WTC11 (cell line): ENCODE measurements at regions of chr22 and their contacts with region 1.

Region 1: DNA sequence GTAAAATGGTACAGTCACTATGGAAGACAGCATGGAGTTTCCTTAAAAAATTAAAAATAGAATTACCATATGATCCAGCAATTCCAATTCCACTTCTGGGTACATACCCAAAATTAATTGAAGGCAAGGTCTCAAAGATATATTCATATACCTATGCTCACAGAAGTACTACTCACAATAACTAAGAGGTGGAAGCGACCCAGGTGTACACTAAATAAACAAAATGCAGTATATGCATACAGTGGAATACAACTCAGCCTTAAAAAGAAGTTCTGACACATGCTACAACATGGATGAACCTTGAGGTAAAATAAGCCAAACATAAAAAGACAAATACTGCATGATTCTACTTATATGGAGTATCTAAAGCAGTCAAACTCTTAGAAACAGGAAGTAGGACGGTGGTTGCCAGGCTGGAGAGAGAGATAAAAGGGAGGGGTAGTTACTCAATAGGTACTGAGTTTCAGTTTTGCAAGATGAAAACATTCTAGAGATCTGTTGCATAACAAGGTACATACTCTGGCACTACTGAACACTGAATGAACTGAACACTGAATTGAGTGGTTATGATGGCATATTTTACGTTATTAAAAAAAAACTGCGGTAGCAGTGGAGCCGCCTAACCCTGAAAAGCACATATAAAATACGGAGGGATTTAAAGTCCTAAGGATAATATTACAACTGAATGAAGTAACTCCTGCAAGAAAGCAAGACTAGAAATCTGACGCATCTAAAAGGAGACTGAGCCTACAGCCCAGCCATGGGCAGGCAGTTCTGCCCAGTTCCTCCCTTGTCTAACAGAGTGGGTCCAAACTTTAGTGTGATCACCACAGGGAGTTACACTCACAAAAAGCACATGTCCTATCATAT is 12.8 kb downstream of the DGCR2 start:
- DNase-seq: no peak
- ATAC-seq: no peak
- H3K4me3 Mint-ChIP-seq: no peak overlapping the region
- H3K27ac Mint-ChIP-seq: peak overlapping the region; percentile 55
- H3K4me1 Mint-ChIP-seq: peaks cover 22% of the 10 kb centered on the region
- H3K27me3 Mint-ChIP-seq: no peaks in the 10 kb centered on the region
- CTCF ChIP-seq: no peak

Region 2: GRCh38 chr22:19085233-19085718 is 24.2 kb before region 1 on chr22:
- CTCF ChIA-PET with region 1: interaction called, 11 read pairs
- POLR2A ChIA-PET with region 1: interaction called, 6 read pairs
- DNase-seq: no peak
- ATAC-seq: peak; percentile 70
- H3K4me3 Mint-ChIP-seq: no peak overlapping the region
- H3K27ac Mint-ChIP-seq: peak overlapping the region; percentile 75; the same call in 1 of the 2 replicates
- H3K4me1 Mint-ChIP-seq: peaks cover 10% of the 10 kb centered on the region
- H3K27me3 Mint-ChIP-seq: no peaks in the 10 kb centered on the region
- CTCF ChIP-seq: no peak

Region 3: GRCh38 chr22:19122143-19122751 is 12.8 kb after region 1 on chr22 and contains the start of gene DGCR2:
- CTCF ChIA-PET with region 1: interaction called, 17 read pairs
- POLR2A ChIA-PET with region 1: interaction called, 4 read pairs
- DNase-seq: peak; percentile 98
- ATAC-seq: peak; percentile 99
- H3K4me3 Mint-ChIP-seq: peak within 1 kb of the TSS; percentile 81
- H3K27ac Mint-ChIP-seq: peak within 1 kb of the TSS; percentile 71
- H3K4me1 Mint-ChIP-seq: peaks cover 27% of the 10 kb centered on the region
- H3K27me3 Mint-ChIP-seq: no peaks in the 10 kb centered on the region; the same call in 1 of the 2 replicates
- CTCF ChIP-seq: no peak
- total RNA-seq, gene DGCR2: 56.8 to 64.2 TPM (median 60.3 TPM) in 3 replicates

Region 4: DNA sequence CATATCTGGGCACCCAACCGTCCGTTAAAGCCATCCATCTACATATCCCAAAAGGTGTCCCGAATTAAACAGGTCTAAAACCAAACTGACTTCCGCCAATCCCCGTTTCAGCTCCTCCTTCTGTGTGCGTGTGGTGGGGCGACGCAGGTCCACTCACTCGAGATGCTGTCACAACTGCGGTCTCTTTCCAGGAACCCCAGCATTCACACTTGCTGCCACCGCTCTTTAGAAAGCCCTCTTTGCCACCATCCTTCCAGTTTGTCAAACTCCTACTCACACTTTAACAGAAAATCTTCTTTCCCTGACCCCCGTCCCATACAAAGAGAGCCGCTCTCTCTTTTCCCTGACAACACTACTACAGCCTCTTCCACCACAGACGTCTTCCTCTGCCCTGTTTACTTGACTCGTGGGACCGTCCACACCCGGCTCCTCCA is 34.6 kb after region 1 on chr22:
- CTCF ChIA-PET with region 1: interaction called, 14 read pairs
- POLR2A ChIA-PET with region 1: interaction called, 3 read pairs
- DNase-seq: no peak
- ATAC-seq: no peak
- H3K4me3 Mint-ChIP-seq: peak overlapping the region; percentile 100
- H3K27ac Mint-ChIP-seq: peak overlapping the region; percentile 94
- H3K4me1 Mint-ChIP-seq: peaks cover 20% of the 10 kb centered on the region
- H3K27me3 Mint-ChIP-seq: peaks cover 36% of the 10 kb centered on the region
- CTCF ChIP-seq: no peak